Posterior vena cava (tissue), 2 donors: ENCODE measurements at regions of chr4 and their contacts with region 1.

Region 1: GRCh38 chr4:40395908-40396793 is 61.0 kb downstream of the CHRNA9 start:
- DNase-seq: no peak

Region 2: DNA sequence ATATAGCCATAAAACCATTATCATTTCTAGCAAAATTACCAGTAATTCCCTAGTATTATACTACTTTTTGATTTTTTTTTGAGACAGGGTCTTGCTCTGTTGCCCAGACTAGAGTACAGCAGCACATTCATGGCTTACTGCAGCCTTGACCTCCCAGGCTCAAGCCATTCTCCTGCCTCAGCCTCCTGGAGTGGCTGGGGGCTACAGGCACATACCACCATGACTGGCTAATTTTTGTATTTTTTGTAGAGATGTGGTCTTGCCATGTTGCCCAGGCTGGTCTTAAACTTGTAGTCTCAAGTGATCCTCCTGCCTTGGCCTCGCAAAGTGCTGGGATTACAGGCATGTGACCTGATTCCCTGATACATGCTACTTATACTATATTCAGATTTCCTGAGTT is 325.8 kb before region 1 on chr4:
- intact Hi-C with region 1: loop called in 1 of 2 experiments (anchors 5 kb)
- DNase-seq: no peak

Region 3: DNA sequence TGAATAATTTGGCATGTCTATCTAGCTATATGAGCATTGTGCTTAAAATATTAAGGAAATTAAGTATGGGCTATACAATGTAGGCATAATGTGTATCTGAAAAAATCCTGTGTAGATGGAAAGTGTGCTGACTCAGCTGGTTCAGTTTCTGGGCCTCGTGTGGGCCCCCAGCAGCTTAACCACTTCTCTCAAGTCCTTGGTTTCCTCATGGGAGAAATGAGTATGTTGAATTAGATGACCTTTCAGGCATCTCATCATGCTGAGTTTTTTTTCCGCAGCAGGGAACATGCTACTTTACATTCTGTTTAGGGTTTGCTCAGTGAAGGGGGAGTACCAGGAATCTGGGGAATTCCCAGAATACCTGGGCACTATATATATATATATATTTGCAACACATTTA is 168.9 kb before region 1 on chr4:
- intact Hi-C with region 1: no loop called
- DNase-seq: no peak

Region 4: DNA sequence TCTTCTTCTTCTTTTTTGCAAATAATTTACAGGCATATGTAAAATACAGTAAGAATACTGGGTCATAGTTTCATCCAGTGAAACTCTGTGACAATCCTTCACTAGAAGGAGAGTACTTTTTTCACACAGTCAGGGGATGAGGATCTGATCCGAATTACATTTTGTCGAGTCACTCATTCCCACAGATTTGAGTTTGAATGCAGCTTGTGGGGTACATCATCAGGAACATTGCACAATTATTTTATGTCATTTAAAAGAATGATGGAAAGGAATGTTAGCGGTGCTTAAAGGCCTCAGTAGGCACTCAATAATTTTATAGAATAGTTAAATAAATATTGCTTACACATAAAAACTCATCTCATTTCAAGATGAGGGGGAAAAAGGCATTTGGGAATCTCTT is 27.6 kb after region 1 on chr4:
- intact Hi-C with region 1: no loop called
- DNase-seq: no peak